A549 (cell line): ENCODE measurements at regions of chr15 and their contacts with region 1.

Region 1: DNA sequence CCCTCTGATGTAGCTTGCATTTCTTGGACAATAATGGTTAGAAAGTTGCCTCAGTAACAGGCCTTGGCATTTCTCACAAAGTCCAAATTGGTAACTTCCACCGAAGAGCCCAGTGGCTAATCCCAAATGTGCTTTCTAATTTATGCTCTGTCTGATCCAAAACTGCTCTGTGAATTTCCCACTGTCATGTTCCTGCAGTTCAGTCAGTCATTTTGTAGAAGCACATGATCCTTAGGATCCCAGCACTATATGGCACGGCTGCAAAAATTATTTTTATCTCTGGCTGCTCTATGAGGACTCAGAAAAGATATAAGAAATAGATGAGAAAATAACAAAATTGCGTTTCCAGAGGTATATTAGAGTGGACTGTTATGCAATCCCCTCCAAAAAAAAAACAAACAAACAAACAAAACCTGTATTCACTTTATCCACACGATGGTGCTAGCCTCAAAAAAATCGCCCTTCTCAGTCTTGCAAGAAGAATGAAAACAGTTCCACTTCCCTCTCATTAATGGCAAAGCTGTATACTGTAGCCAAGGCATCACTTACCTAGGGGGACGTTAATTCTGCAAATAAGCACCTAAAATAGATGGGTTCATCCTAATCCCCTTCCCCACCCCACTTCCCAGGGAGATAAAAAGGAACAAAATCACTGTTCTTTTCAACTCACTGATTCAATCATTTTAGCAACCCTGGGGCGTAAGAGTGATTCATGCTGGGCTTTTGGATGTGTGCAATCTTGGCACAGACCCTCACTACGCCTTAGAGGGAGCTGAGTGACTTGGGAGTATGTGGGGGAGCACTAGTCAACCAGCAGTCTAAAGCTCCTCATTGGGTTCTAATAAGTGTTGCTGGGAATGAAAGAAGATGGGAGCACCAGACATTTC is 61.3 kb downstream of the TMCO5A start:
- DNase-seq: peak in 1 of 2 experiments; percentile 65
- ATAC-seq: peak; percentile 79 to 80; a peak in 5 of 6 replicates
- H3K4me3 ChIP-seq: no peak overlapping the region
- H3K27ac ChIP-seq: no peak overlapping the region
- H3K4me1 ChIP-seq: no peaks in the 10 kb centered on the region
- CTCF ChIP-seq: peak; percentile 71
- EP300 ChIP-seq: no peak
- POLR2A ChIP-seq: no peak
- RAD21 ChIP-seq: peak; percentile 77 to 80

Region 2: GRCh38 chr15:37981775-37982174 is 13.9 kb before region 1 on chr15:
- CTCF ChIA-PET with region 1: interaction called, 26 read pairs
- POLR2A ChIA-PET with region 1: no interaction called
- DNase-seq: peak in 1 of 2 experiments; percentile 42
- ATAC-seq: peak; percentile 81 to 89
- H3K4me3 ChIP-seq: no peak overlapping the region
- H3K27ac ChIP-seq: no peak overlapping the region
- H3K4me1 ChIP-seq: no peaks in the 10 kb centered on the region
- CTCF ChIP-seq: peak; percentile 21; the same call in 1 of the 3 replicates
- EP300 ChIP-seq: no peak
- POLR2A ChIP-seq: no peak
- RAD21 ChIP-seq: 0 out of 5 replicates have a peak, but pooled peaks of 1 of the 2 experiments have one; percentile 25

Region 3: DNA sequence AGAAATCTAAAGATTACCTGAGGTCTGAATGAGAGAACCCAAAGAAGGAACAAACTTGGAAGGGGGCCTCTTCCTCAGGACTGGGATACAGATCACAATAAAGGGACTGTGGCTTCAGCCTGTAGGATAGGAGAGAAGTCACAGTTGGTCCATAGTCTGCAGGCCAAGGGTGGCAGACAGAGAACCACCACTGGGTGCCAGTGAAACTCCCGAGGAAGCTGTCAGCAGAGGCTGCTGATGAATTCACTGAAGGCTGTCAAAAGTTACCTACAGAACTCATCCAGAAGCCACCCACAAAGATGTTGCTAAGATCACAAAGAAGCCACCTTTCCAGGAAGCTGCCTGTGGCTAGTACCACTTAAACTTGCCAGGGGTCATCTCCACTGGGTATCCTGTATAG is 17.2 kb after region 1 on chr15:
- CTCF ChIA-PET with region 1: no interaction called
- POLR2A ChIA-PET with region 1: no interaction called
- DNase-seq: no peak
- ATAC-seq: no peak
- H3K4me3 ChIP-seq: no peak overlapping the region
- H3K27ac ChIP-seq: no peak overlapping the region
- H3K4me1 ChIP-seq: no peaks in the 10 kb centered on the region
- CTCF ChIP-seq: no peak
- EP300 ChIP-seq: no peak
- POLR2A ChIP-seq: no peak
- RAD21 ChIP-seq: no peak

Region 4: DNA sequence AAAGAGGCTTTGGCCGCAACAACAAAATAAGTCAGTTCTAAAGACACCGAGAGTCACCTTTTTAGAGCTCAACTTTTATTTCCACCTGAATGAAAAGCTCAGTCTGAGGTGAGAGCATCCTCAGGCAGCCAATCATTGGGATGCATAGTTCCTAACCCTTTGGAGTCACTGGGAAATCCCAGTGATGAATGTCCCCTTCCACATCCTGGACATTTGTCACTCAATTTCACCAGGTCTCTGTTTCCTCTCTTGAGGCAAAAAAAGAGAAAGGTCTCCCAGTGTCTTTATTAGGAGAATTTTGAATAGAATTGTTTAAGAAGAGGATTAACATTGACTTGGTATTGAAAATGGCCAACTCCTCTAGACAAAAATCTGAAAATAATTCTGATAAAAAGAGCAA is 119.4 kb after region 1 on chr15:
- CTCF ChIA-PET with region 1: no interaction called
- POLR2A ChIA-PET with region 1: no interaction called
- DNase-seq: no peak
- ATAC-seq: no peak
- H3K4me3 ChIP-seq: no peak overlapping the region
- H3K27ac ChIP-seq: no peak overlapping the region
- H3K4me1 ChIP-seq: no peaks in the 10 kb centered on the region
- CTCF ChIP-seq: no peak
- EP300 ChIP-seq: no peak
- POLR2A ChIP-seq: no peak
- RAD21 ChIP-seq: no peak

Region 5: DNA sequence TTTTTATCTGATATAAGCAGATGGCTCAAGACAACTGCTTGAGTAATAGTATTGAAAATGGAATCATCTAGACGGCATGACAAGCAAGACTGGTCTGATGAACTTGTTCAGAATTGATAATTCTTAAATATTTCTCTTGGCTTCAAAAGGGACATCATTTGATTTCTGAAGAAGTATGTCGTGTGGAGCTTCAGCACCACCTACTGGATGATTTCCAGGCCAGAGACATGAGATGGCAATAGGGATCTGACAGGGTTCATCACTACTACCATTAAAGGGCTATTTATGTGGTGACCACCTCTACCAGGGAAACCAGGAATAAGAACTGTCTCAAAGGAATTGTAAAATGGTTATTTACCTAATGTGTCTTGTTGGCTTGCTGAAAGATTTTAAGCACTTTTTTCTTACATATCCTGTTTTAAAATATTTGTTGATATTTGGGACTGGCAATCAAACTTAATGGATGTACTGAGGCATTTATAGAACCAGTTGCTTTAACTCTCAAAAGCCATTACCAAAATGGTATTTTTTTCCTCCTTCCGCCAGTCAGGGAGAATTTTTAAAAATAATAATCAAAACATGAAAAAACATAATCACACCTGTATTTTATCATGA is 358.7 kb after region 1 on chr15:
- CTCF ChIA-PET with region 1: interaction called, 20 read pairs
- POLR2A ChIA-PET with region 1: no interaction called
- DNase-seq: peak; percentile 20 to 66
- ATAC-seq: peak; percentile 74 to 81; a peak in 5 of 6 replicates
- H3K4me3 ChIP-seq: no peak overlapping the region
- H3K27ac ChIP-seq: no peak overlapping the region
- H3K4me1 ChIP-seq: no peaks in the 10 kb centered on the region
- CTCF ChIP-seq: peak; percentile 68
- EP300 ChIP-seq: no peak
- POLR2A ChIP-seq: no peak
- RAD21 ChIP-seq: peak; percentile 78 to 81

Region 6: GRCh38 chr15:38374556-38374955 is 378.9 kb after region 1 on chr15:
- CTCF ChIA-PET with region 1: interaction called, 12 read pairs
- POLR2A ChIA-PET with region 1: no interaction called
- DNase-seq: no peak
- ATAC-seq: no peak
- H3K4me3 ChIP-seq: no peak overlapping the region
- H3K27ac ChIP-seq: no peak overlapping the region
- H3K4me1 ChIP-seq: no peaks in the 10 kb centered on the region
- CTCF ChIP-seq: no peak
- EP300 ChIP-seq: no peak
- POLR2A ChIP-seq: no peak
- RAD21 ChIP-seq: no peak

Region 7: DNA sequence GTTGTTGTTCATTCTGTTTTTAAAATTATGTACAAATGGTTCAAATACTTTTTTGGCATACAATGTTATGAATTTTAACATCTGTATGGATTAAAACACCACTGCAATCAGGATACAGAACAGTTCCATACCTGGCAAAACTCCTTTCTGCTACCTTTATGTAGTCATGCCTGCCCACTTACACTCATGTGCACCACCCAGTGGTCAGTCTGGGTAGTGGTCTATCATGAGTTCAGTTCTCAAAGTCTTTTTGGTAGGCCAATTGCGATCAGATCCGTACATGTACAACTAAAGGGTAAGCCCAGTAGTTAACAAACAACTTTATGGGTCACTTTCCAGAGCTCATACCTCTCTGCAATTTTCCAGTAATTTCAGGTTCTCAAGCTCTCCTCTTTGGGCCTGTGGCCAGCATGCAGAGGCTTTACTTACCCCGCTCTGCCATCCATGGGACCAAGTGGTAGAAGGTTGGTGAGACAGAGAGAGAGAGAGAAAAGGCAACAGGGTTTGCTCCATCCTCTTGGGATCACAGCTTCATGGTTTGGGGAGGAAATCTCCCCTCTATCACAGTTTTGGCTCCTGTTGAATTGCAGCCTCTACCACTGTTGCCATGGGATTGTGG is 394.3 kb after region 1 on chr15:
- CTCF ChIA-PET with region 1: interaction called, 25 read pairs
- POLR2A ChIA-PET with region 1: no interaction called
- DNase-seq: peak; percentile 13 to 50
- ATAC-seq: peak; percentile 59 to 81; a peak in 5 of 6 replicates
- H3K4me3 ChIP-seq: no peak overlapping the region
- H3K27ac ChIP-seq: no peak overlapping the region
- H3K4me1 ChIP-seq: no peaks in the 10 kb centered on the region
- CTCF ChIP-seq: peak; percentile 60
- EP300 ChIP-seq: no peak
- POLR2A ChIP-seq: no peak
- RAD21 ChIP-seq: peak; percentile 57 to 60